ENCODE measurements at regions of chr14 and their contacts with region 1.

Region 1: GRCh38 chr14:91714805-91715204 is 17.1 kb downstream of the CATSPERB start:
- DNase-seq: peak in 9 of 14 experiments; percentile 16 to 63 (median 41)
- ATAC-seq: peak; percentile 96
- H3K4me3 ChIP-seq: no peak overlapping the region
- H3K4me3 Mint-ChIP-seq: peak overlapping the region; percentile 9
- H3K27ac ChIP-seq: no peak overlapping the region
- H3K27ac Mint-ChIP-seq: peak overlapping the region; percentile 67
- H3K4me1 ChIP-seq: no peaks in the 10 kb centered on the region
- H3K4me1 Mint-ChIP-seq: peaks cover 11% of the 10 kb centered on the region
- H3K27me3 ChIP-seq: no peaks in the 10 kb centered on the region
- H3K27me3 Mint-ChIP-seq: no peaks in the 10 kb centered on the region
- CTCF ChIP-seq: peak; percentile 43

Region 2: GRCh38 chr14:91154851-91155625 is 559.8 kb before region 1 on chr14:
- CTCF ChIA-PET with region 1: no interaction called
- POLR2A ChIA-PET with region 1: no interaction called
- intact Hi-C with region 1: no loop called
- DNase-seq: peak in 4 of 14 experiments; percentile 11 to 46 (median 22)
- ATAC-seq: no peak
- H3K4me3 ChIP-seq: no peak overlapping the region
- H3K4me3 Mint-ChIP-seq: no peak overlapping the region
- H3K27ac ChIP-seq: no peak overlapping the region
- H3K27ac Mint-ChIP-seq: no peak overlapping the region
- H3K4me1 ChIP-seq: peaks cover 6% of the 10 kb centered on the region
- H3K4me1 Mint-ChIP-seq: peaks cover 6% of the 10 kb centered on the region
- H3K27me3 ChIP-seq: no peaks in the 10 kb centered on the region
- H3K27me3 Mint-ChIP-seq: no peaks in the 10 kb centered on the region
- CTCF ChIP-seq: no peak

Region 3: GRCh38 chr14:91292491-91292890 is 422.3 kb before region 1 on chr14:
- CTCF ChIA-PET with region 1: no interaction called
- POLR2A ChIA-PET with region 1: no interaction called
- intact Hi-C with region 1: loop called in 1 of 2 experiments (anchors 5 kb)
- DNase-seq: no peak
- ATAC-seq: no peak
- H3K4me3 ChIP-seq: no peak overlapping the region
- H3K4me3 Mint-ChIP-seq: no peak overlapping the region
- H3K27ac ChIP-seq: no peak overlapping the region
- H3K27ac Mint-ChIP-seq: peak overlapping the region; percentile 74
- H3K4me1 ChIP-seq: peaks cover 2% of the 10 kb centered on the region
- H3K4me1 Mint-ChIP-seq: no peaks in the 10 kb centered on the region
- H3K27me3 ChIP-seq: no peaks in the 10 kb centered on the region
- H3K27me3 Mint-ChIP-seq: no peaks in the 10 kb centered on the region
- CTCF ChIP-seq: no peak